ENCODE measurements at regions of chr22 and their contacts with region 1.

Region 1: GRCh38 chr22:26756675-26757293 is 99.4 kb downstream of the MIAT start:
- DNase-seq: peak; percentile 81
- CTCF ChIP-seq: peak; percentile 79

Region 2: GRCh38 chr22:26658671-26659478 is 97.9 kb before region 1 on chr22:
- in situ Hi-C with region 1: no loop called
- DNase-seq: peak; percentile 77
- CTCF ChIP-seq: no peak

Region 3: GRCh38 chr22:28009272-28009827 is 1252.6 kb after region 1 on chr22:
- in situ Hi-C with region 1: loop called (anchors 25 kb)
- DNase-seq: peak; percentile 90
- CTCF ChIP-seq: peak; percentile 97

Measured in GM13976 (cell line).